ENCODE measurements at regions of chr10 and their contacts with region 1.

Region 1: DNA sequence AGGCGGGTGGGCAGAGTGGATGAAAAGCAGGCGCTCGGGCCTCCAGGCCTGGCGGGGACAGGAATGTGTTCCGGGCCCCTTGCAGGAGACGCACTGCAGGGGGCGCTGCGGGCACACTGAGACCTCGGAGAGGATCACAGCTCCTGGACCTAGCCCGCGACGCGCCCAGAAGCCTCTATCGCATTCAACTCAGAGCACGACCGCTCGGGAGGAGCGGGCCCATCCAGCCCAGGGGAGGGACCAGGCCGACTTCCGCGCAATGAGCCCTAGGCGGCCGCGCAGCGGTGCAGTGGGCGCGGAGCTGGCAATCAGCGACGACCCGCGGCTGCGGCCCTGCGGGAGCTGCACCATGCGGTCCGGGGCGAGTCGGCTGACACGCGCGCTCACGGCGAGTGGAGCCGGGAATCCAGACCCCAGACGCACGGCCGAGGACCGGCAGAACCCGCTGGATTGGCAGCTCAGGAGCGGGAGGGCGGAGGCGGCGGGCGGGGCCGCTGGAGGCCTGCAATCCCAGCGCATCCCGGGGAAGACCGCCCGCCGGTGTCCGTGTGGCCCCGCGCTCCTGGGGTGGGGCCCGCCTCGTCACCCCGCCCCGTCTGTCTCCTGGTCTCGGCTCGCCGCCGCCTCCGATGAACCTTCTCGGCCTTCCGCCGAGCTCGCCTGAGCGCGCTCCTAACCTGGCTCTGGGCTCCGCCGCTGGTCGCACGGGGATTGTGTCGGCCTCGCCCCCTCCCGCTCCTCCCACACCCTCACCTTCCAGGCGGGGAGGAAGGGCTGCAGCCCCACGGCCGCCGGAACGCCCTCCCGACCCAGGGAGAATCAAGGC is 33.5 kb upstream of the GRID1 start:
- DNase-seq: peak; percentile 83
- ATAC-seq: peak; percentile 92
- H3K4me3 ChIP-seq: peak overlapping the region; percentile 75
- H3K27ac ChIP-seq: peak overlapping the region; percentile 84
- H3K4me1 ChIP-seq: peaks cover 10% of the 10 kb centered on the region
- H3K27me3 ChIP-seq: no peaks in the 10 kb centered on the region
- CTCF ChIP-seq: peak; percentile 89 to 98 (median 97)
- EP300 ChIP-seq: peak in 1 of 2 experiments; percentile 37; a peak in 1 of 4 replicates
- POLR2A ChIP-seq: peak; percentile 85
- RAD21 ChIP-seq: peak; percentile 85

Region 2: GRCh38 chr10:85635650-85636049 is 764.4 kb before region 1 on chr10:
- CTCF ChIA-PET with region 1: no interaction called
- POLR2A ChIA-PET with region 1: no interaction called
- RAD21 ChIA-PET with region 1: no interaction called
- SMC1A ChIA-PET with region 1: no interaction called
- in situ Hi-C with region 1: no loop called
- intact Hi-C with region 1: no loop called
- DNase-seq: no peak
- ATAC-seq: peak; percentile 23; the same call in 1 of the 3 replicates
- H3K4me3 ChIP-seq: no peak overlapping the region
- H3K27ac ChIP-seq: no peak overlapping the region
- H3K4me1 ChIP-seq: no peaks in the 10 kb centered on the region; the same call in 1 of the 2 replicates
- H3K27me3 ChIP-seq: no peaks in the 10 kb centered on the region
- CTCF ChIP-seq: no peak
- EP300 ChIP-seq: no peak
- POLR2A ChIP-seq: no peak
- RAD21 ChIP-seq: no peak

Region 3: GRCh38 chr10:86411281-86411841 is 11.3 kb after region 1 on chr10:
- CTCF ChIA-PET with region 1: interaction called, 77 read pairs
- POLR2A ChIA-PET with region 1: interaction called, 110 read pairs
- RAD21 ChIA-PET with region 1: interaction called, 155 read pairs
- SMC1A ChIA-PET with region 1: interaction called, 129 read pairs
- in situ Hi-C with region 1: no loop called
- intact Hi-C with region 1: no loop called
- DNase-seq: peak; percentile 74
- ATAC-seq: peak; percentile 74
- H3K4me3 ChIP-seq: peak overlapping the region; percentile 38; the same call in 1 of the 2 replicates
- H3K27ac ChIP-seq: peak overlapping the region; percentile 82
- H3K4me1 ChIP-seq: peaks cover 38% of the 10 kb centered on the region
- H3K27me3 ChIP-seq: no peaks in the 10 kb centered on the region
- CTCF ChIP-seq: no peak
- EP300 ChIP-seq: peak in 1 of 2 experiments; percentile 66; a peak in 1 of 4 replicates
- POLR2A ChIP-seq: peak; percentile 68
- RAD21 ChIP-seq: no peak

Region 4: GRCh38 chr10:86449926-86450558 is 50.0 kb after region 1 on chr10:
- CTCF ChIA-PET with region 1: interaction called, 4 read pairs
- POLR2A ChIA-PET with region 1: interaction called, 3 read pairs
- RAD21 ChIA-PET with region 1: interaction called, 4 read pairs
- SMC1A ChIA-PET with region 1: interaction called, 10 read pairs
- in situ Hi-C with region 1: no loop called
- intact Hi-C with region 1: no loop called
- DNase-seq: no peak
- ATAC-seq: peak; percentile 41; the same call in 1 of the 3 replicates
- H3K4me3 ChIP-seq: no peak overlapping the region
- H3K27ac ChIP-seq: no peak overlapping the region
- H3K4me1 ChIP-seq: no peaks in the 10 kb centered on the region; the same call in 1 of the 2 replicates
- H3K27me3 ChIP-seq: no peaks in the 10 kb centered on the region
- CTCF ChIP-seq: no peak
- EP300 ChIP-seq: no peak
- POLR2A ChIP-seq: no peak
- RAD21 ChIP-seq: no peak

Region 5: GRCh38 chr10:86521678-86522509 is 121.8 kb after region 1 on chr10 and contains the start of gene WAPL:
- CTCF ChIA-PET with region 1: interaction called, 10 read pairs
- POLR2A ChIA-PET with region 1: interaction called, 8 read pairs
- RAD21 ChIA-PET with region 1: interaction called, 13 read pairs
- SMC1A ChIA-PET with region 1: interaction called, 4 read pairs
- in situ Hi-C with region 1: no loop called
- intact Hi-C with region 1: no loop called
- DNase-seq: peak; percentile 59
- ATAC-seq: peak; percentile 96
- H3K4me3 ChIP-seq: peak within 1 kb of the TSS; percentile 83
- H3K27ac ChIP-seq: peak within 1 kb of the TSS; percentile 76
- H3K4me1 ChIP-seq: peaks cover 13% of the 10 kb centered on the region
- H3K27me3 ChIP-seq: no peaks in the 10 kb centered on the region
- CTCF ChIP-seq: no peak
- EP300 ChIP-seq: no peak
- POLR2A ChIP-seq: peak; percentile 80
- RAD21 ChIP-seq: no peak
- polyA plus RNA-seq, gene WAPL: 15.7 to 18.5 TPM

Region 6: GRCh38 chr10:86644152-86644793 is 244.2 kb after region 1 on chr10:
- CTCF ChIA-PET with region 1: interaction called, 3 read pairs
- POLR2A ChIA-PET with region 1: interaction called, 7 read pairs
- RAD21 ChIA-PET with region 1: interaction called, 17 read pairs
- SMC1A ChIA-PET with region 1: interaction called, 8 read pairs
- in situ Hi-C with region 1: no loop called
- intact Hi-C with region 1: no loop called
- DNase-seq: peak; percentile 20
- ATAC-seq: peak; percentile 75
- H3K4me3 ChIP-seq: no peak overlapping the region
- H3K27ac ChIP-seq: no peak overlapping the region
- H3K4me1 ChIP-seq: peaks cover 18% of the 10 kb centered on the region
- H3K27me3 ChIP-seq: no peaks in the 10 kb centered on the region
- CTCF ChIP-seq: peak; percentile 18 to 31 (median 23); a peak in 3 of 6 replicates
- EP300 ChIP-seq: no peak
- POLR2A ChIP-seq: no peak
- RAD21 ChIP-seq: 0 out of 2 replicates have a peak, but pooled peaks have one; percentile 11

Measured in GM12878 (cell line).